WTC11 (cell line): ENCODE measurements at regions of chr21 and their contacts with region 1.

Region 1: GRCh38 chr21:34603002-34603709 is 11.8 kb downstream of the RCAN1 start:
- DNase-seq: peak; percentile 88
- ATAC-seq: peak; percentile 99
- H3K4me3 Mint-ChIP-seq: no peak overlapping the region
- H3K27ac Mint-ChIP-seq: no peak overlapping the region
- H3K4me1 Mint-ChIP-seq: peaks cover 13% of the 10 kb centered on the region
- H3K27me3 Mint-ChIP-seq: no peaks in the 10 kb centered on the region
- CTCF ChIP-seq: peak; percentile 25; the same call in 1 of the 2 replicates

Region 2: GRCh38 chr21:34510148-34511142 is 92.7 kb before region 1 on chr21:
- CTCF ChIA-PET with region 1: interaction called, 137 read pairs
- POLR2A ChIA-PET with region 1: interaction called, 3 read pairs
- DNase-seq: peak; percentile 90
- ATAC-seq: peak; percentile 95
- H3K4me3 Mint-ChIP-seq: no peak overlapping the region
- H3K27ac Mint-ChIP-seq: no peak overlapping the region
- H3K4me1 Mint-ChIP-seq: no peaks in the 10 kb centered on the region; the same call in 1 of the 2 replicates
- H3K27me3 Mint-ChIP-seq: no peaks in the 10 kb centered on the region
- CTCF ChIP-seq: peak; percentile 75

Region 3: DNA sequence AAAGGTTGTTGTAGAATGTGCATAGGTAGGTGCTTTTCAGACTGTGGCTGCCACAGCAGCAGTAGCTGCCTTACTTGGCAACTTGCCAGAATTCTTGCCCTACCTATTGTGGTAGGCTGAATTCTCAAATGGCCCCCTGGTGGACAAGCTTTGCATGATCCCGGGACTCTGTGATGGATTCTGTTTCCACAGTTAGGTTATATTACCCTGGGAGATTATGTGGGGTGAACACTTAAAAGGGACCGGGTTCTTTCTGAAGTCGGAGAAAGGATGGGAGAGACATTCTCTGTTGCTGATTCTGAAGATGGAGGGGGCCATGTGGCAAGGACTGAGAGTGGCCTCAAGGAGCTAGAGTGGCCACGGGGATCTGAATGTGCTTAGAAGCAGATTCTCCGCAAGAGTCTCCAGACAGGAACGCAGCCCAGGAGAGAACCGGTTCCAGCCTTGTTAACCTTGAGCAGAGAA is 59.1 kb before region 1 on chr21:
- CTCF ChIA-PET with region 1: interaction called, 12 read pairs
- POLR2A ChIA-PET with region 1: no interaction called
- DNase-seq: peak; percentile 66
- ATAC-seq: peak; percentile 86
- H3K4me3 Mint-ChIP-seq: no peak overlapping the region
- H3K27ac Mint-ChIP-seq: no peak overlapping the region
- H3K4me1 Mint-ChIP-seq: peaks cover 9% of the 10 kb centered on the region
- H3K27me3 Mint-ChIP-seq: 0 out of 2 replicates have a peak, but pooled peaks cover 6% of the 10 kb centered on the region
- CTCF ChIP-seq: peak; percentile 58

Region 4: DNA sequence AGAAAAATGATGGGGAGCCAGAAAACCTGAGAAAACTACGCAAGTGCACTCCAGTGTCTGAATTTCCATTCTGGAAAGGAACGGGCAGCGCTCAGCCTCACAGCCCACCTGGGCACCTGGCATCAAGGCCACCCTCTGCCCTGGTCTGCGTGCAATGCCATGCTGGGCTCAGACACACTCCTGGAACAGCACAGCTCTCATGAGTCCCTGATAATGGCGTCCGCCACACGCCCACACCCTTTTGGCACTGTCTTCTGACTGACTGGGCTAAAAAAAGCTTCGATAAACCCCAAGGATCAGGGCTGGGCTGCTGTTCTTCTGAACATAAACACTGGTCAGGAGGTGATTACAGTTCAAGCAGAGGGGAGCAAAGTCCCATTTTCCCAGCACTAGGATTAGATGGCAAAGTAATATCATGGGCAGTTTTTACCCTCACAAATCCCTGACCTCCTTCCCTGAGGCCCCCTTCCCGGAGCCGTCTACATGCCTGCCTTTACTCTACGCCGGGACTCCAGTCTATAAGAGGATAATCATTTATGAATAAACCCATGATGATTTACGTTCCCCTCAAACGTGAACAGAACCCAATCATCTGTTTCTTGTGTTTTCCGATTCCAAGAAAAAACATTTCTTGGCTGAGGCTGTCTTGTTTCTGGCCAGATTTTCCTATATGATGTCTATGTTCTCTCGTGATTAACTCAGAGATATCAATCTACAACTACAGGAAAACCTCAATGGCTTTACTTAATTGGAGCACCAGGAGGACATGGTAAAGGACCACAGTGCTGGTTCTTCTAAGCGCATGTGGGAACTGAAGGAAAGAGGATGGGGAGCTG is 10.8 kb before region 1 on chr21:
- CTCF ChIA-PET with region 1: interaction called, 15 read pairs
- POLR2A ChIA-PET with region 1: no interaction called
- DNase-seq: no peak
- ATAC-seq: no peak
- H3K4me3 Mint-ChIP-seq: no peak overlapping the region
- H3K27ac Mint-ChIP-seq: no peak overlapping the region
- H3K4me1 Mint-ChIP-seq: peaks cover 5% of the 10 kb centered on the region
- H3K27me3 Mint-ChIP-seq: no peaks in the 10 kb centered on the region
- CTCF ChIP-seq: no peak

Region 5: DNA sequence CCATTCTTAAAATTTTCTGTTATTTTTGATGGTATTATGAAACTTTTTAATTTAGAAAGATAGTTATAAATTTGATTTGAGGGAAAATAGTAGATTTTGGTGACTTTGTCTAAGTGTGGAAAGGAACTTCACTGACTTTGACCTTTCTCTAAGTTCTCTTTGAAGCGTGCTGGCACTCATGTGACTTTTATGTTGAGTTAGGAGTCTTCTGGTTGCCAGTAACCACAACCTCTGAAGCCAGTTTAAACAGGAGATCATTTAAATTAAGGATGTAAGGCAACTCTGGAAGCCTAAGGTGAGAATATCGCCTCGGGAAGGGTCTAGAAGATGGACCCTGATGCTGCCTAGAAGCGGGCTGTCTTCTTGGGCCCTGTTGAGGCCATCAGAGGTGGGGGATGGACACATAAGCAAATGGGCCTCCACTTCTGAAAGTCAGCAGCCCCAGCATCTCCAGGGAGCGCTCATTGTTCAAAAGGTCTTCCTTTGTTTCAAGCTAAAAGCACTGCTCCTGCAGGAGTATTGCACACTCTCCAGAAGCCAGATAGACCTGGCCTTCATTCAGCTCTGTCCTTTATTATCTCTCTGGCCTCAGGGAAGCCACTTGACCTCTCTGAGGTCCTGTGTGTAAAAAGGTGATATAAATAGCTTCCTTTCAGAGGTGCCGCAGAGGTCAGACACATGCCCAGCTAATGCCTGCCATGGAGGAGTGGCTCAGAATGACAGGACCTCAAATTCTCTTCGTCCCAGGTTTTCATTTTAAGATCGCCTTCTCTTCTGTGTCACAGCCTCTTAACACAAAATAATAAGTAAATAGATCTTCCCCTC is 16.9 kb after region 1 on chr21:
- CTCF ChIA-PET with region 1: interaction called, 10 read pairs
- POLR2A ChIA-PET with region 1: no interaction called
- DNase-seq: no peak
- ATAC-seq: no peak
- H3K4me3 Mint-ChIP-seq: no peak overlapping the region
- H3K27ac Mint-ChIP-seq: no peak overlapping the region
- H3K4me1 Mint-ChIP-seq: 0 out of 2 replicates have a peak, but pooled peaks cover 4% of the 10 kb centered on the region
- H3K27me3 Mint-ChIP-seq: peaks cover 16% of the 10 kb centered on the region
- CTCF ChIP-seq: no peak

Region 6: GRCh38 chr21:34857874-34858273 is 254.7 kb after region 1 on chr21:
- CTCF ChIA-PET with region 1: no interaction called
- POLR2A ChIA-PET with region 1: no interaction called
- DNase-seq: no peak
- ATAC-seq: peak; percentile 78
- H3K4me3 Mint-ChIP-seq: no peak overlapping the region
- H3K27ac Mint-ChIP-seq: no peak overlapping the region
- H3K4me1 Mint-ChIP-seq: peaks cover 5% of the 10 kb centered on the region; the same call in 1 of the 2 replicates
- H3K27me3 Mint-ChIP-seq: peaks cover 26% of the 10 kb centered on the region
- CTCF ChIP-seq: no peak